Left cardiac atrium (tissue), 4 donors: ENCODE measurements at regions of chr7 and their contacts with region 1.

Region 1: GRCh38 chr7:105652359-105652993 is 71.2 kb upstream of the EFCAB10 start:
- DNase-seq: peak; percentile 81
- ATAC-seq: peak; percentile 87 to 88

Region 2: DNA sequence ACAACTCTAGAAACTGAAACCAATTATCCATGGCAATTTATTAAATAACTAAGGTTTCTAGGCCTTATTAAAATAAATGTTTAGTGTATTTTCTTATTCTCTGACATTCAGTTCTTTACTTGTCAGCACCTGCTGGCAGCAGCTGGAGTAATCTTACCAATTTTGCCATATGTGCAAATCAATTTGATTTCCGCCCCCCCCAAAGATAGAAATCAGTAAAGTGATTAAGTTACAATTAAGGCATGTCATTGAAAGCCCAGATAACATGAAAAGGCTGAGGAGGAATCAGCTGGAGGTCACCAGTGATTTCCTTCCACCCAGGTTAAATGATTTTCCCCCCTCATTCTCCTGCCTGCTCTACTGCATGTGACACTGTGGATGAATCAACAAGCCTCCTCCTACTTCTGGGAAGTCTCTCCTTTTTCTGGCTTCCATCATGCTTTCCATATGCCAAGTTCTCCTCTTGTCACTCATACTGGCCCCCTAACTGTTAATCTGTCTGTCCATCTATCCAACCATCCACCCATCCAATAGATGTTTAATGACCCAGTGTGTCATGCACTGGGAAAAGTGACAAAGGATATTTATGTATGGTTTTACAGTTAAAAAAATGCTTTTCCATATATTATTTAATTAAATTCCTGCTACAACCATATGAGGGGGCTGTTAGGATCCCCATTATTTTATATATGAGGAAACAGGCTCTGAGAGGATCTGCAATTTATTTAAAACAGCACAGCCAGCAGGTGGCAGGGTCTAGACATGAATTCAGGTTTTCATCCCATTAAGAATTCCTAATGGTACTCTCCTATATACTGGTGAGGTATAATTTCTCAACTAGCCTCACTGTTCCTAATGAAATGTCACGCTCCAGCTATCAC is 107.4 kb after region 1 on chr7:
- intact Hi-C with region 1: loop called in 1 of 2 experiments (anchors 10 kb)
- DNase-seq: peak; percentile 32
- ATAC-seq: peak; percentile 78 to 85

Region 3: DNA sequence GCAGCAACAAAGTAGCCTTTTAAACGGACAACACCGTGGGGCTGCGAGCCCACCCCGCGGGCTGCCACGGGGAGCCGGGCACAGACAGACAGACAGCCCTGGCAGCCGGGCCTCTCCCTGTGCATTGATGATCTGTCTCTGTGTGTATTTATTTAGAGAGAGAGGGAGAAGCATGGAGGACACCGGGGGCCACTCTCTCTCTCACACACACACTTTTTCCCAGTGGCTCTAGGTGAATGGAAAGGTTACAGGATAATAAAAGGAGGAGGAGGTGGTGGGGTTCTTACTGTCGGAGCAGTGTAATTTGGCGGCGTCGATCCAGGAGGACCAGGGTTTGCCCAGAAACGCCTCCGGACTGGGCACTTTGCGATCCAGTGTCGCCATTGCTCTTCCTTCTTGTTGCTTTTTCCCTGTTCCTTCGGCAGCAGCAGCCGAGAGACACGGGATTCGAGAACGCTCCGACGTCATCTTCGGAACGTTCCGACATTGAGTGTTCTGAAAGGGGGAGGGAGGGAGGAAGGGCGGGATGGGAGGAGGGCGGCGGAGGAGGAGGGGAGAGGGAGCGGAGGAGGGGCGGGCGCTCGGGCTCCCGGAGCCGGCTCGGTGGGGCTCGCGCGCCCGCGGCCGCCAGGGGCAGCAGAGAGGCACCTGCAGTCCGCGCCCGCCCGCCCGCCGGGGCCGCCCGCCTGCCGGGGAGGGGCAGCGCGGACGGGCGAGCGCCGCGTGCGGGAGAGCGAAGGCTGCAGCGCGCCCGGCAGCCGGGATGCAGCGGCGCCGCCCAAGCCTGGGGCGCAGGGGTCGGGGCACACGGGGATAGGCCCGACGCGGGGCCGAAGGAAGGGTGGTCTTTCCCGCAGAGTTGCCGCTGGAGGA is 223.9 kb after region 1 on chr7 and contains the start of gene ATXN7L1:
- intact Hi-C with region 1: loop called in 1 of 2 experiments (anchors 10 kb)
- DNase-seq: peak; percentile 94
- ATAC-seq: peak; percentile 96 to 98
- total RNA-seq, gene ATXN7L1: 5.7 to 6.0 TPM

Region 4: GRCh38 chr7:106031300-106032035 is 379.0 kb after region 1 on chr7:
- intact Hi-C with region 1: loop called in 1 of 2 experiments (anchors 10 kb)
- DNase-seq: no peak
- ATAC-seq: peak in 1 of 2 donors; percentile 39

Region 5: DNA sequence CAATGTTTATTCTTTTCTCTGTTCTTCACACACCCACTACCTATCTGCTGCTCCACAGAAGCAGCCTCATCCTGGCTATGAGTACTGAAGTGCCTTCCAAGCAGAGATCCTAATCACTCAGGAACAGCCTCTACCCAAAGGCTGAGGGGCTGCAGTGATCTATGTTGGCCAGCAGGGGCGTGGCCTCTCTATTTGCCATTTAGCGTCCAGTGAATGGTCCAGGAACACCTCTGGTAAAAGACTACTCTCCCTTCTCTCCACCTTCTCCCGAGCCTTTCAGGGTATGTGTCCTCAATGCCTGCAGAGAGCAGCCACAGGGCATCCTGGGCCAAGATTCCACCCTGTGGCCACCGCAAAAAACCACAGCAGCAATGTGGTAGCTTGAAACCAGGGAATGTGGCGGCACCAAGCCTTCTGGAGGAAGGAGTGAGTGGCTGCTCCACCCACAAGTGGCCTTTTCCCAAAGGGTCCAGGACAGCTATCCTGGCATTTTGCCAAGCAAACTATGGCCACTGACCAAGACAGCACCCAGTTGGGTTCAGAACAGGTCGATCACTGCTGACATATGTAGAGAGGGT is 388.8 kb after region 1 on chr7:
- intact Hi-C with region 1: loop called (anchors 2 to 10 kb)
- DNase-seq: no peak
- ATAC-seq: no peak